RWPE1 (cell line): ENCODE measurements at regions of chr1 and their contacts with region 1.

Region 1: DNA sequence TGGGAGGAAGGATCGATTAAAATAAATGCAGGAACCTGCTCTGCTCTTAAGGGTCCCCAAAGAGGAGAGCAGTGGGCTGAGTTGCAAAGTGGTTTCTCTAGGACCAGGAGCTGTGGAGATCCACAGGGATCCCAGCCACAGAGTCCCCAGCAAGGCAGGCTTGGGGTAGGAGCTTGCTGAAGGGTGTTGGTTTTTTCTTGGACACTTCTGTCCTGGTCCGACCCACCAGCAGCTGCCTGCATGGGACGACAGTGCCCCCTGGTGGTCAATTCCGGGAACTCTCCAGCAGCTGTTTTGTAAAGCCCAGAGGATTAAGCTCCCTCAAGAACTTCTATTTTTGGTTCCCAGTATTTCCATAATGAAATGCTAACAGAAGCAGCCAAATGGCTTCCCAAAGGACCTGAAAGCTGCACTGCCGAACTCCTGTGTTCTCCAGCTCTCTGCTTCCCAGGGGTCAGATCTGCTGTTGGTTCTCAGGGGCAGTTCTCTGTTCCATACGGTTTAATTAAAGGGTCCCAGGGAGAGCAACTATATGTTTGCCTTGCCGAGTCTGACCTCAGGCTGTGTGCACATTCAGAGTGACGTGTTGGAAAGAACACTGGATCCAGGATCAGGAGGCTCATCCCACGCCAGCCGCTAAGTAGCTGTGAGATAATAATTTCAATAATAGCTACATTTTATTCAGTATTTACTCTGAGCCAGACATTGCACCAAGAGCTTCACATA is 23.2 kb downstream of the NENF start:
- DNase-seq: peak; percentile 79
- H3K27ac ChIP-seq: no peak overlapping the region
- CTCF ChIP-seq: peak; percentile 95

Region 2: DNA sequence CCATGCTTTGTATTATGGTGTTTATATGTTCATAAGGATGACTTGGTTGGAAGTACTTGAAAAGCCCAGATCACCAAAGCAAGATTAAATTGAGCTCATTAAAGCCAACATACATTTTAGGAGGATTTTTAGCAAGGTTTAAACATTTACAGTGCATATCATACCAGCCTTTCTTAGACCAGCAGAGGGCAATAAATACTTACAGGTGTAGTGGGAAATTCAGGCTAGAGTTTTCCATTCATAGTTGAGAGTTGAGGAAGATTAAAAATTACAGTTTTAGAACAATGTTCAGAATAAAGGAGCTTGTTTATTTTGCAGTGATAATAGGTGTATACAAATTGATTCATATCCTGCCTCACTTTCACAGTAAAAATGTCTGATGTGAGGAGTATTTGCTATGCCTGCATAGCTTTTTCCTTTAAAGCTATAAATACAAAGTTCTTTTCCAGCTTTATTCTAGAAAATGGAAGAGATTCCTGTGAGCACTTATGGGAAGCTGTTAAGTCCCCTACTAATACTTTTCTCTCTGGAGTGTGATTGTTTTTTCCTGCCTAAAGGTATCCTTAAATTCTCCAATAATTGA is 385.2 kb before region 1 on chr1:
- CTCF ChIA-PET with region 1: interaction called, 53 read pairs
- POLR2A ChIA-PET with region 1: no interaction called
- DNase-seq: peak; percentile 20
- H3K27ac ChIP-seq: no peak overlapping the region
- CTCF ChIP-seq: peak; percentile 57

Region 3: DNA sequence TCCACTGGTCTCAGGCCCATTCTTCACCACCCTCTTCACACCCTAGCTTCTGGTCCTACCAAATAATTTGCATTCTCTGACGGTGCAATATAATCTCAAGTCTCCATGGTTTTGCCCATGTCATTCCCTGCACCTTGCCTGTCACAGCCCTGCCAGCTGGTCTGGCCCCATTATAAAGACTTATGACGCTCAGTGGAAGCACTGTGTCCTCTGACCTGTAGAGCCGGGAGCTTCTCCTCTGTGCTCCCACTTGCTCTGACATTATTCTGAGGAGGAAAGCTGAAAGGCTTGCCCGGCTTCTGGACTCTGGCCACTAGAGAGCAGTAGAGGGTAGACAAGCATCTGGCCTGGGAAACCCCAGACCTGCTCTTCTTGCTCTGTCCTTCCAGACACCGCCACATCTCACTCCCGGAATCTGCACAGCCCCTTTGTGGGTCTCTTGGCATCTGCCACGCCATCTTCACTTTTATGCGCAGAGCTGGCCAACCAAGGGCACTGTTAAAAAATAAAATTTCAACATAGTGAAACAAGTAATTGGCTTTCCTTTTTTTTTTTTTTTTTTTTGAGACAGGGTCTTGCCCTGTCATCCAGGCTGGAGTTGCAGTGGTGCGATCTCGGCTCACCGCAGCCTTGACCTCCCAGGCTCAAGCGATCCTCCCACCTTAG is 21.2 kb after region 1 on chr1:
- CTCF ChIA-PET with region 1: interaction called, 20 read pairs
- POLR2A ChIA-PET with region 1: no interaction called
- DNase-seq: peak; percentile 79
- H3K27ac ChIP-seq: no peak overlapping the region
- CTCF ChIP-seq: peak; percentile 92

Region 4: GRCh38 chr1:212498283-212499040 is 42.5 kb after region 1 on chr1:
- CTCF ChIA-PET with region 1: no interaction called
- POLR2A ChIA-PET with region 1: no interaction called
- DNase-seq: peak; percentile 83
- H3K27ac ChIP-seq: no peak overlapping the region
- CTCF ChIP-seq: no peak

Region 5: DNA sequence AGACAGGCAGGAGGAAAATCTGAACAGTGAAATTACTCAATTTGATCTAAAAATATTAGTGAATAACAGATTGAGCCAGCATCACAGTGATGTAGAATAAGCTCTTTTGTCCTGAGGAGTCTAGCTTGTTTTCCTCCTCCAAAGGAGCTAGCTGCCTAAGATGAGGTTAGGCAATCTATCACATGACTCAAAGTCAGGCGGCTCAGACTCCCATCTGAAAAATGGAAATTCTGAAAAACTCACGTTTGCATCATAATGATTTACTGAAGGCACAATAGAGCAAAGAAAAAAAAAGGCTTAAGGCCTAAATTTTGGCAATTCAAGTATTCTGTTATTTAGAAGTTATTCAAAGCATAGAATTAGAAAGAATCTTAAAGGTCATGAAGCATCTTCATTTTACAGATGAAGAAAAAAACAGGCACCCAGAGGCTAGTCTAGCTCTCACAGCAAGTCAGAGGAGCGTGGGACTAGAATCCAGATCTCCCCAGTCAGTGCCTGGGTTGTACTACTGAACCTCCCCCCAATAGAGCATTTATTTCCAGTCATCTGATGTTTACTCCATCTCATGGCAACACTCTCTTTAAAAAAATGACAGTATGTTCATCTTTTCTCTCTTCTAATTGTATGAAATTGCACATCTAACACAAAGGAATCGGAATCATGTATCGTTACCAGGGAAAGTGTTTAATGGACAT is 90.1 kb after region 1 on chr1:
- CTCF ChIA-PET with region 1: no interaction called
- POLR2A ChIA-PET with region 1: no interaction called
- DNase-seq: no peak
- H3K27ac ChIP-seq: no peak overlapping the region
- CTCF ChIP-seq: no peak